Heart right ventricle (tissue), 16 donors: ENCODE measurements at regions of chr17 and their contacts with region 1.

Region 1: GRCh38 chr17:7695586-7695985 is 7.3 kb downstream of the WRAP53 start:
- DNase-seq: no peak
- ATAC-seq: no peak
- H3K4me3 ChIP-seq: no peak overlapping the region
- H3K27ac ChIP-seq: no peak overlapping the region
- H3K4me1 ChIP-seq: no peaks in the 10 kb centered on the region
- H3K27me3 ChIP-seq: no peaks in the 10 kb centered on the region
- CTCF ChIP-seq: no peak

Region 2: DNA sequence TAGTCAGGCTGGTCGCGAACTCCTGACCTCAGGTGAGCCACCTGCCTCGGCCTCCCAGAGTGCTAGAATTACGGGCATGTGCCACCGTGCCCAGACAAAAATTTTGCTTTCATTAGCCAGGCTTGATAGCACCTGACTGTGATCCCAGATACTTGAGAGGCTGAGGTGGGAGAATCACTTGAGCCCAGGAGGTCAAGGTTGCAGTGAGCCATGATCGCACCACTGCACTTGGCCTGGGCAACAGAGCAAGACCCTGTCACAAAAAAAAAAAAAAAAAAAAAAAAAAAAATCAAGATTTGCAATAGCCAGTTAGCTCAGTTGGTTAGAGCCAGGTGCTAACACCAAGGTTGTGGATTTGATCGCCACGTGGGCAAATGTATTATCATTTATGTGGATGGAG is 74.8 kb before region 1 on chr17:
- intact Hi-C with region 1: no loop called
- DNase-seq: no peak
- ATAC-seq: no peak
- H3K4me3 ChIP-seq: no peak overlapping the region
- H3K27ac ChIP-seq: no peak overlapping the region
- H3K4me1 ChIP-seq: peaks cover 0 to 1% (median 0%) of the 10 kb centered on the region in 9 donors
- H3K27me3 ChIP-seq: no peaks in the 10 kb centered on the region
- CTCF ChIP-seq: no peak

Region 3: GRCh38 chr17:7632492-7632894 is 63.1 kb before region 1 on chr17:
- intact Hi-C with region 1: loop called in 1 of 10 experiments (anchors 10 kb)
- DNase-seq: peak in 1 of 2 donors; percentile 17
- ATAC-seq: peak in 2 of 8 donors; percentile 29 to 36
- H3K4me3 ChIP-seq: no peak overlapping the region
- H3K27ac ChIP-seq: no peak overlapping the region
- H3K4me1 ChIP-seq: peaks cover 3 to 25% (median 6%) of the 10 kb centered on the region in 9 donors
- H3K27me3 ChIP-seq: no peaks in the 10 kb centered on the region
- CTCF ChIP-seq: peak; percentile 11 to 56 (median 48)

Region 4: GRCh38 chr17:7646457-7646856 is 49.1 kb before region 1 on chr17:
- intact Hi-C with region 1: no loop called
- DNase-seq: no peak
- ATAC-seq: no peak
- H3K4me3 ChIP-seq: no peak overlapping the region
- H3K27ac ChIP-seq: no peak overlapping the region
- H3K4me1 ChIP-seq: peaks cover 4 to 20% (median 15%) of the 10 kb centered on the region in 9 donors
- H3K27me3 ChIP-seq: peaks cover 5 to 39% (median 29%) of the 10 kb centered on the region in 7 donors
- CTCF ChIP-seq: no peak

Region 5: DNA sequence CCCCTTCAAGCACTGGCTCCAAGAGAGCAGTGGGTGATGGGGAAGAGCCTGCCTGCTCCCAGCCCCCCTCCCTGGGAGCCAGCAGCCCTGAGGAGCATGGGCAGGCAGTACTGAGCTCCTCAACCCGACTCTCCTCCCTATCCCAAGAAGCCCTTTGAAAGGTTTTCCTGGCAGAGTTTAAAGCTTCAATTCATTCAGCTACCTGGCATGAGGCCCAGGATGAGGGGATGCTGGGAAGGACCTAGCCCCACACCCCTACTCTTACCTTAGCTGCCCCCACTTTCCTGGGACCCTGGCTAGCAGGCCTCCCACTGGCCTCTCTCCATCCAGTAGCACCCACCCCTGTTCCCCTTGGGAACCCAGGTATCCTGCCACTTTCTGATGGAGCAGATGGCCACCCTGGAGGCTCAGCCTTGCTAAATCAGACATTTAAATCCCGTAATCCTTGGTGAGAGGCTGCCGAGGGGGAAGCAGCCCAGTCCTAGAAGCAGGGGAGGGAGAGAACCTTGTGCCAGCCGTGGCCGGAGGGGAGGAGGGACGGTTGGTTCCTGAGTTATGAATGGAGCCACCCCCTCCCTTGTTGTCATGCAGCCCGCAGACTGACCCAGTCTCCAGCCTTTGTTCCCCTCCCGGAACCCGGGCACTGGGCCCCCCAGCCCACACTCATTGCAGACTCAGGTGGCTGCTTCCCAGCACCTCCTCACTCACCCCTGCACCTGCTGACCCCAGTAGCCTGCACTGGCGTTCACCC is 27.8 kb before region 1 on chr17:
- intact Hi-C with region 1: no loop called
- DNase-seq: no peak
- ATAC-seq: no peak
- H3K4me3 ChIP-seq: no peak overlapping the region
- H3K27ac ChIP-seq: no peak overlapping the region
- H3K4me1 ChIP-seq: no peaks in the 10 kb centered on the region
- H3K27me3 ChIP-seq: no peaks in the 10 kb centered on the region
- CTCF ChIP-seq: no peak

Region 6: DNA sequence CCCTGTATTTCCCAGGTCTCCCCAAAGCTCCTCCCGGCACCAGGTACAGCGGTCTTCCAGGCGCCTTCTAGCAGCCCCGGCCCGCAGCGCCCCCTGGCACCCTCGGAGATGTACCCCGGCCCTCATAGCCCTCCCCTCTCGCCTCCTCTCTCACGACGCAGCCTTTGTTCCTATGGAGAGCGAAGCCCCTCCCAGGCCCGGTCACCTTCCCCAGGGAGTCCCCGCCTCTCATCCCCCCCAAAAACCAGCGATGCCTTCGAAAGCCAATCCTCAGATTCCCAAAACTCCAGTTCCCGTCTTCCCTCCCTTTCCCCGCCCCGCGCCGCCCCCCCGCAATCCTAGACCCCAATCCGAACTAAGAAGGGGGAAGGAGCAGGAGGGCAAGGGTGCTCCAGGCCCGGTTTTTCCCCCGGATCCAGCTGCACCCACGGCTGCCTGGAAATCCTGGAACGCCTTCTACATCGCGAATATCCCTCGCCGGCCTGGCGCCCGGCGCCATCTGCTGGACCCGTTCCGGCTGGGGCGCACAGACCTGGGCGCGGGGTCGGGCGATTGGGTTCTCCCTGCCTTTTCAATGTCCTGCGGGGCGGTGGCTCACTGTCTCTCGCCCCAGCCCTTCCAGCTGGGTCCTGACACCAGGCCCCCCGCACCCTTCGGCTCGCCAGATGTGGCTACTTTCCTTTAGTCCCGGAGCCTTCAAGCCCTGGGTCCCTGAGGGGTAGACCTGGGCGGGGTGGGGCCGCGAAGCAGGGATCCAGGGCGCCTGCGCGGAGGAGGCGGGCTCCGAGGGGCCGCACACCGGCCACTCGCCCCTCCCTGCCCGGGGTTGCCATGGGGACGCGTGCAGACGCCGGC is 21.5 kb after region 1 on chr17 and contains the start of gene DNAH2:
- intact Hi-C with region 1: no loop called
- DNase-seq: peak; percentile 78 to 87
- ATAC-seq: peak; percentile 84 to 94 (median 90)
- H3K4me3 ChIP-seq: peak within 1 kb of the TSS; percentile 37 to 72 (median 63)
- H3K27ac ChIP-seq: peak within 1 kb of the TSS in 7 of 10 donors; percentile 9 to 63 (median 40)
- H3K4me1 ChIP-seq: peaks cover 3 to 22% (median 8%) of the 10 kb centered on the region in 9 donors
- H3K27me3 ChIP-seq: peaks cover 4 to 93% (median 40%) of the 10 kb centered on the region in 7 donors
- CTCF ChIP-seq: peak; percentile 14 to 71 (median 51)
- total RNA-seq, gene DNAH2: 0.02 to 0.30 (median 0.05) TPM in 7 of 10 donors, not detected in the others